ENCODE measurements at regions of chr7 and their contacts with region 1.

Region 1: GRCh38 chr7:138752568-138753518 is 45.0 kb upstream of the TMEM213 start:
- DNase-seq: peak; percentile 96
- ATAC-seq: peak; percentile 94
- H3K4me3 Mint-ChIP-seq: peak overlapping the region; percentile 16
- H3K27ac Mint-ChIP-seq: peak overlapping the region; percentile 90
- H3K4me1 Mint-ChIP-seq: peaks cover 61% of the 10 kb centered on the region
- H3K27me3 Mint-ChIP-seq: no peaks in the 10 kb centered on the region

Region 2: GRCh38 chr7:138002096-138002827 is 750.6 kb before region 1 on chr7:
- CTCF ChIA-PET with region 1: no interaction called
- POLR2A ChIA-PET with region 1: no interaction called
- intact Hi-C with region 1: loop called in 1 of 2 experiments (anchors 1 kb)
- DNase-seq: peak; percentile 98
- ATAC-seq: peak; percentile 96
- H3K4me3 Mint-ChIP-seq: peak overlapping the region; percentile 82
- H3K27ac Mint-ChIP-seq: peak overlapping the region; percentile 92
- H3K4me1 Mint-ChIP-seq: peaks cover 24% of the 10 kb centered on the region
- H3K27me3 Mint-ChIP-seq: no peaks in the 10 kb centered on the region

Region 3: GRCh38 chr7:138137423-138138171 is 615.2 kb before region 1 on chr7:
- CTCF ChIA-PET with region 1: no interaction called
- POLR2A ChIA-PET with region 1: no interaction called
- intact Hi-C with region 1: no loop called
- DNase-seq: no peak
- ATAC-seq: no peak
- H3K4me3 Mint-ChIP-seq: no peak overlapping the region
- H3K27ac Mint-ChIP-seq: no peak overlapping the region
- H3K4me1 Mint-ChIP-seq: no peaks in the 10 kb centered on the region
- H3K27me3 Mint-ChIP-seq: peaks cover 16% of the 10 kb centered on the region

Region 4: DNA sequence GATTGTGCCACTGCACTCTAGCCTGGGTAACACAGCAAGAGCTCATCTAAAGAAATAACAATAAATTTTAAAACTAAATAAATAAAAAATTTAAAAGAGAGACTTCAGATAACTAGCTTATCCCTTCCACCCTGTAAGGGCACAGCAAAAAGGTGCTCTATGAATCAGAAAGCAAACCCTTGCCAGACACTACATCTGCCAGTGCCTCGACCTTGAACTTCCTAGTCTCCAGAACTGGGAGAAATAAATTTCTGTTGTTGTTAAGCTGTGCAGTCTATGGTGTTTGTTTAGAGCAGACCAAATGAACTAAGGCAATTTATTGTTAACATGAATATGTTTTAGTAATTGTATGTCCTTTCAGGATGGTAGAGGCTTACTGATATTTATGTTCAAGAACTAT is 467.7 kb before region 1 on chr7:
- CTCF ChIA-PET with region 1: no interaction called
- POLR2A ChIA-PET with region 1: no interaction called
- intact Hi-C with region 1: no loop called
- DNase-seq: no peak
- ATAC-seq: no peak
- H3K4me3 Mint-ChIP-seq: no peak overlapping the region
- H3K27ac Mint-ChIP-seq: no peak overlapping the region
- H3K4me1 Mint-ChIP-seq: no peaks in the 10 kb centered on the region
- H3K27me3 Mint-ChIP-seq: no peaks in the 10 kb centered on the region

Region 5: DNA sequence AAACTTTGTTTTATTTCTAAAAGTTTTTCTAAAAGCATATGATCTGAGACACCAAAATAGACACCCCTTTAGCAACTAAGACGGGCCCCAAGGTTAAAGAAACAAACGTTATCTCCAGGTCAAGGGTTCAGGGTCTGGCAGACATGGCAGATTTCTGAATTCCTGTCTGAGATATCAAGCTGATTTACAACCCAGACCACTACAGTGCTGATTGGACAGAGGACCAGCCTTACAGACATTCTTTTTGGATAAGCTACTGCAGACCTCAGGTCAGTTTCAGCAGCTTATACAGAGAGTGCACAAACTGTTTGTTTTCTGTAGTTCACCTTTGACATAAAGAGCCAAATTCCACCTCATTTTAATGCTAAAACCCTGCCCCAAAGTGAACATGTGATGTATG is 86.5 kb before region 1 on chr7:
- CTCF ChIA-PET with region 1: no interaction called
- POLR2A ChIA-PET with region 1: no interaction called
- intact Hi-C with region 1: no loop called
- DNase-seq: no peak
- ATAC-seq: no peak
- H3K4me3 Mint-ChIP-seq: no peak overlapping the region
- H3K27ac Mint-ChIP-seq: no peak overlapping the region
- H3K4me1 Mint-ChIP-seq: peaks cover 13% of the 10 kb centered on the region
- H3K27me3 Mint-ChIP-seq: peaks cover 17% of the 10 kb centered on the region

Region 6: GRCh38 chr7:138738551-138739335 is 14.1 kb before region 1 on chr7:
- CTCF ChIA-PET with region 1: interaction called, 15 read pairs
- POLR2A ChIA-PET with region 1: no interaction called
- intact Hi-C with region 1: no loop called
- DNase-seq: peak; percentile 90
- ATAC-seq: peak; percentile 94
- H3K4me3 Mint-ChIP-seq: no peak overlapping the region
- H3K27ac Mint-ChIP-seq: no peak overlapping the region
- H3K4me1 Mint-ChIP-seq: peaks cover 2% of the 10 kb centered on the region
- H3K27me3 Mint-ChIP-seq: no peaks in the 10 kb centered on the region

Region 7: GRCh38 chr7:138903186-138903820 is 150.5 kb after region 1 on chr7:
- CTCF ChIA-PET with region 1: no interaction called
- POLR2A ChIA-PET with region 1: no interaction called
- intact Hi-C with region 1: loop called in 1 of 2 experiments (anchors 1 kb)
- DNase-seq: peak; percentile 86
- ATAC-seq: peak; percentile 94
- H3K4me3 Mint-ChIP-seq: peak overlapping the region; percentile 66
- H3K27ac Mint-ChIP-seq: peak overlapping the region; percentile 83
- H3K4me1 Mint-ChIP-seq: peaks cover 42% of the 10 kb centered on the region
- H3K27me3 Mint-ChIP-seq: peaks cover 2% of the 10 kb centered on the region

Region 8: DNA sequence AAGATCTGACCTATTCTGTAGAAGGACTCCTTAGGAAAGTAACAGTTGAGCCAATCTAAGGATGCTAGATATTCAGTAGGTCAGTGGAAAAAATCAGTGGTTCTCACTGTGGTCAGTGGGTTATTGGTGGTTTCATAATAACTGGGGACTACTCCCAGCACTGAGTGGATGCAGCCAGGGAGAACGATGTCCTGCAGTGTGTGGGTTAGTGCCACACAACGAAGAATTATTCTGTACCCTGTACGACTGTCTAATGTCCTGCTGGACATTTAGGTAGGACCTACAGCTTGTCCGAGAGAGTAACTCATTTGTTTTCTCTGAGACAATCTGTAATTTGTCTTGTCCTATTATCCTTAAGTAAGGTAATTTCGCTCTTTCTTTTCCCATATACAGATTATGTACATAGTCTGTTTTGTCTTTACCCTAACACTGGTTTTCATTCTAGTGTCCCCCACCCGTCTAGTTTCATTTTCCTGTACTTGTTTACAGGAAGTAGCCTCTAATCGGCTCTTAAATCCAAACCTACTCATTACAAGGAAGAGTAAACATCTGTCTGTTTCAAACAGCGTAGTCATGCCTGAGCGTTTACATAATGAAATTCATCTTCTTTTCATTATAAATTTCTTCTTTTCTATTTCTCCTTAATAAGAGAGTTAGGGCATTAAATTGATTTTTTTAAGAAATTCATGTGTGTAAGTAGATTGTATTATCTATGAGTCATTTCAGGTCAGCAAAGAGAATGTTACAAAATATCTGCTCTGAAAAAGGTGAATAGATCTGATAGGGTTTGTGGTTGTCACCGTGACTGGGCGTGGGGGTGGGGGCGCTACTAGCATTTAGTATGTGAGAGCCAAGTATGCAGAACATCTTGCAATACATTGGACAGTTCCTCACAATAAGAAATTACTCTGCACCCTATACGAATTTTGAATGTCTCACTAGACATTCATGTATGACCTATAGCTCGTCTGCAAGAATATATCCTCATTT is 291.3 kb after region 1 on chr7:
- CTCF ChIA-PET with region 1: no interaction called
- POLR2A ChIA-PET with region 1: no interaction called
- intact Hi-C with region 1: loop called in 1 of 2 experiments (anchors 5 kb)
- DNase-seq: peak; percentile 83
- ATAC-seq: peak; percentile 50
- H3K4me3 Mint-ChIP-seq: no peak overlapping the region
- H3K27ac Mint-ChIP-seq: peak overlapping the region; percentile 53
- H3K4me1 Mint-ChIP-seq: peaks cover 64% of the 10 kb centered on the region
- H3K27me3 Mint-ChIP-seq: no peaks in the 10 kb centered on the region

Region 9: DNA sequence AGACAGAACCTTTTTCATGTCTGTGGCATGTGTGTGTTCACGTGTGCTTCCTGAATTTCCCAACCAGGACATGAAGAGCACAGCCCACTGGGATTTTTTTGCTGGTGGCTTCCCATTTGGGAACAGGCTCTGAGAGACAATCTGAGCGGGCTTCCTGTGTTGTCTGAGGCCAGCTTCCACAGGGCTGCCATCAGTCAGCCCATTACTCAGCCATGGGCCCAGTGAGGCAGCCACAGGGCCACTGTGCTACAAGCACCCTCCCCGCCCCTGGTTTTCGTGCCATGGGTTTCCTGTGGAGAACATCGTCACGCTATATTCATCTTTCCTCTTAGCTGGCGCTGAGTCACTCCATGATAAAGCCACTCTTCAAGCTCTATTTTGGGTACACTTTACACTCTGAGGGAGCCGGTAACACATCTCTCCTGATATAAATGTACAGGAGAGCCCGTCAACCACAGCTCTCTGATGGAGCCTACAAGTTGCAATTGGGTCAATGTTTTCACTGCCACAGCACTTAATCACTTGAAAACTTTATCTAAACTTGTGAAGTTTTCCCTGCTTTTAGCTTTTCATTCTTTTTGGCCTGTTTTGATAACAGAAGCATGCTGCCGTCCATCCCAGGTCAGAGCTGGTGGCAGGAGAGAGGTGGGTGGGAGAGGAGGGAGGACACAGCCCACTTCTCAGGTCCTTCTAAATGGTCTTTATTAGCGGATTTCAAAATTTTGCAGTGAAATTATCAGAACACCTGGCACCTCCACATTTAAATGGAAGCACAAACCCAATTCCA is 928.0 kb after region 1 on chr7:
- CTCF ChIA-PET with region 1: no interaction called
- POLR2A ChIA-PET with region 1: no interaction called
- intact Hi-C with region 1: loop called in 1 of 2 experiments (anchors 5 kb)
- DNase-seq: peak; percentile 94
- ATAC-seq: peak; percentile 73
- H3K4me3 Mint-ChIP-seq: peak overlapping the region; percentile 68
- H3K27ac Mint-ChIP-seq: peak overlapping the region; percentile 98
- H3K4me1 Mint-ChIP-seq: peaks cover 53% of the 10 kb centered on the region
- H3K27me3 Mint-ChIP-seq: no peaks in the 10 kb centered on the region

Measured in activated CD4-positive, alpha-beta T cell treated with anti-CD3 and anti-CD28 coated beads for 36 hours (primary cell).